ENCODE measurements at regions of chr20 and their contacts with region 1.

Region 1: DNA sequence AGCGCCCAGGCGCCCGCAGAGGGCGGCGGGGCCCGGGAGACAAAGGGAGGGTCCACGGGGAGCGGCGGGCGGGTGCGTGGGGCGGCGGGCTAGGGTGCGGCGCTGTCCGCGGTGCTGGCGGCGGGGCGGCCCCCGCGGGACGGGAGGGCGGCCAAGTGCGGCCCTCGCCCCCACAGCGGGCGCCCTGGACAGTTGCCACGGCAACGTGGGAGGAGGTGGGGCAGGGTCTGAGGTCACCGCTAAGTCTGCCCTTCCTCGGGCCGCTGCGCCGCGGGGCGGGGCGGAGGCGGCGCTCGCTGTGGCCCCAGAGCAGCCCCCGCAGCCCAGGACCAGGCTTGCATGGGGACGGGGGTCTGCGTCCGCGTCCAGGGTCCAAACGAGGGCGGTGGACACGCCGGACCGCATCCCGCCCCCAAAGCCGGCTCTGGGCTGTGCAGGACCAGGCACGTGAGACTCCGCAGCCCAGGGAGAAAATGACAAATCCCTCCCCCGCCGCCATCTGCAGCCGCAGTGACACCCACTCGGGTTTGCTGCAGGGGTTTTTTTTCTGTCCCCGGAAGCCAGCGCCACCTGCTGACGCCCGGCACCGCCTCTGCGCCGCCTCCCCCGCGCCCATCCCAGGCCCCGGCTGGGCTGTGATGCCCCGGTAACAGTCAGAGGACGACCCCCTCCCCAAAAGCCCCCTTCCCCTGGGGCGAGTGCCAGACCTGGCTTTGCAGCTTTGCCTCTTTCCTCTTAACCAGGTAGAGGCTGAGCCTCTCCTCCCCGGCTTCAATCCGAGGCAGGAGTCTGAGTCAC is 36.8 kb downstream of the YTHDF1 start:
- DNase-seq: no peak
- H3K4me3 ChIP-seq: no peak overlapping the region
- H3K27ac ChIP-seq: no peak overlapping the region
- H3K4me1 ChIP-seq: peaks cover 7% of the 10 kb centered on the region
- H3K27me3 ChIP-seq: peaks cover 46% of the 10 kb centered on the region
- CTCF ChIP-seq: peak in 1 of 2 donors; percentile 63

Region 2: DNA sequence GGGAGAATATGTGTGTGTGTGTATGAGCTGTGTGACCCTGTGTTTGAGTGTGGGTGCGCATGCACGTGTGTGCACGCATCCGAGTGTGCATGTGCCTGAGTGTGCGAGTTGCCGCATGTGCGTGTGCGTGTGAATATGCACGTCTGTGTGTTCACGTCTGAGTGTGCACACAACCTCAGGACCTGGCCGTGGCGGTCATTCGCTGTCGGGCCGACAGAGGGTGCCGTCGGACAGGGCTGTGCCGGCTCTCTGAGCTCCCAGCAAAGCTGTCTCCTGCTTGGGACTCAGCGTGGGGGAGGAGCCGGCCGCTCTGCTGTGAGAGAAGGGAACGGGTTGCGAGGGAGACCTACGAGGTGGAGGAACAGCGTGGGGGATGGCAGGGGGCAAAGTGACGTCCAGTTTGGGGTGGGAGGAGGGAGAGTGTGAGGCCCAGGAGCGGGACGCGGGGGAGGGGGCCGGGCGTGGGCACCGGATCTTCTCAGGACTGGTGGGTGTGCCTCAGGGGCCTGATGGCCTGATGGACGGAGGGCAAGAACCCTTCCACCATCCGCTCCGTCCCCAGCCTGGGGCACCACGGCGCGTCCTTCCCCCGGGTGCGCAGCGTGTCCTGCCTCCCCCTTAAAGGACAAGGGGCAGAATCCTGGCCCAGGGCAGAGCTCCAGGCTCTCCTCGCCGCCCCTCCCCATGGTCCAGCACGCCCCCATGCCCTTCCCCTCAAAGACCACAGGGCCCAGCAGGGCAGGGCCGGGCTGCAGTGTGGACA is 206.6 kb before region 1 on chr20:
- CTCF ChIA-PET with region 1: no interaction called
- dilution Hi-C with region 1: no loop called
- in situ Hi-C with region 1: no loop called
- intact Hi-C with region 1: loop called (anchors 1 kb)
- DNase-seq: peak; percentile 64
- H3K4me3 ChIP-seq: peak overlapping the region in 2 of 3 experiments; percentile 10 to 13
- H3K27ac ChIP-seq: no peak overlapping the region
- H3K4me1 ChIP-seq: peaks cover 12% of the 10 kb centered on the region
- H3K27me3 ChIP-seq: peaks cover 3% of the 10 kb centered on the region
- CTCF ChIP-seq: peak; percentile 87 to 94

Region 3: GRCh38 chr20:63032861-63033634 is 146.0 kb before region 1 on chr20:
- CTCF ChIA-PET with region 1: no interaction called
- dilution Hi-C with region 1: no loop called
- in situ Hi-C with region 1: no loop called
- intact Hi-C with region 1: no loop called
- DNase-seq: no peak
- H3K4me3 ChIP-seq: no peak overlapping the region
- H3K27ac ChIP-seq: no peak overlapping the region
- H3K4me1 ChIP-seq: no peaks in the 10 kb centered on the region
- H3K27me3 ChIP-seq: peaks cover 38% of the 10 kb centered on the region
- CTCF ChIP-seq: no peak

Region 4: DNA sequence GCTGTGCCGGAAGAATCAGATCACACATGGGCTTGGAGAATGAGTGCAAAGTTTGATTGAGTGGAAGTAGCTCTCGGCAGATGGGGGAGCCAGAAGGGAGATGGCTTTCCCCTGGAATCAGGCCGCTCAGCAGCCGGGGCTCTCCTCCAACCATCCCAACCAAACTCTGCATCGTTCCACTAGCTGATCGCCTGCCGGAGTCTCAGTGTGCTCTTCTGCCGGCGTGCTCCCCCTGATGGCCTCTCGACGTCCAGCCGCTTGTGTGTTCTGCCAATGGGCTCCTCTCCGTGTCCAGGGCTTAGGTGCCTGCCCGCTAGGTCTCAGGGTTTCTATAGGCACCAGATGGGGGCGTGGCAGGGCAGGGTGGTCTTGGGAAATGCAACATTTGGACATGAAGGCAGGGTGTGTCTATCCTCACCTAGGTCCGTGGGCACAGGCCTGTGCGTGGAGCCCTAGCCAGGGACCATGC is 51.7 kb after region 1 on chr20:
- CTCF ChIA-PET with region 1: no interaction called
- dilution Hi-C with region 1: no loop called
- in situ Hi-C with region 1: no loop called
- intact Hi-C with region 1: loop called (anchors 1 kb)
- DNase-seq: peak; percentile 42
- H3K4me3 ChIP-seq: no peak overlapping the region
- H3K27ac ChIP-seq: no peak overlapping the region
- H3K4me1 ChIP-seq: no peaks in the 10 kb centered on the region
- H3K27me3 ChIP-seq: peaks cover 7% of the 10 kb centered on the region
- CTCF ChIP-seq: peak in 1 of 2 donors; percentile 54